ENCODE measurements at regions of chr4 and their contacts with region 1.

Region 1: GRCh38 chr4:15636835-15637234 is 18.3 kb downstream of the FBXL5 start:
- DNase-seq: no peak
- ATAC-seq: no peak
- H3K4me3 ChIP-seq: no peak overlapping the region
- H3K27ac ChIP-seq: no peak overlapping the region
- H3K4me1 ChIP-seq: no peaks in the 10 kb centered on the region
- H3K27me3 ChIP-seq: no peaks in the 10 kb centered on the region
- CTCF ChIP-seq: no peak

Region 2: GRCh38 chr4:15144249-15144966 is 492.4 kb before region 1 on chr4:
- CTCF ChIA-PET with region 1: no interaction called
- POLR2A ChIA-PET with region 1: no interaction called
- in situ Hi-C with region 1: no loop called
- intact Hi-C with region 1: no loop called
- DNase-seq: no peak
- ATAC-seq: no peak
- H3K4me3 ChIP-seq: no peak overlapping the region
- H3K27ac ChIP-seq: no peak overlapping the region
- H3K4me1 ChIP-seq: no peaks in the 10 kb centered on the region
- H3K27me3 ChIP-seq: no peaks in the 10 kb centered on the region
- CTCF ChIP-seq: no peak

Region 3: GRCh38 chr4:15488658-15489470 is 148.0 kb before region 1 on chr4:
- CTCF ChIA-PET with region 1: no interaction called
- POLR2A ChIA-PET with region 1: no interaction called
- in situ Hi-C with region 1: no loop called
- intact Hi-C with region 1: loop called (anchors 10 kb)
- DNase-seq: no peak
- ATAC-seq: no peak
- H3K4me3 ChIP-seq: no peak overlapping the region
- H3K27ac ChIP-seq: no peak overlapping the region
- H3K4me1 ChIP-seq: no peaks in the 10 kb centered on the region
- H3K27me3 ChIP-seq: no peaks in the 10 kb centered on the region
- CTCF ChIP-seq: no peak

Region 4: DNA sequence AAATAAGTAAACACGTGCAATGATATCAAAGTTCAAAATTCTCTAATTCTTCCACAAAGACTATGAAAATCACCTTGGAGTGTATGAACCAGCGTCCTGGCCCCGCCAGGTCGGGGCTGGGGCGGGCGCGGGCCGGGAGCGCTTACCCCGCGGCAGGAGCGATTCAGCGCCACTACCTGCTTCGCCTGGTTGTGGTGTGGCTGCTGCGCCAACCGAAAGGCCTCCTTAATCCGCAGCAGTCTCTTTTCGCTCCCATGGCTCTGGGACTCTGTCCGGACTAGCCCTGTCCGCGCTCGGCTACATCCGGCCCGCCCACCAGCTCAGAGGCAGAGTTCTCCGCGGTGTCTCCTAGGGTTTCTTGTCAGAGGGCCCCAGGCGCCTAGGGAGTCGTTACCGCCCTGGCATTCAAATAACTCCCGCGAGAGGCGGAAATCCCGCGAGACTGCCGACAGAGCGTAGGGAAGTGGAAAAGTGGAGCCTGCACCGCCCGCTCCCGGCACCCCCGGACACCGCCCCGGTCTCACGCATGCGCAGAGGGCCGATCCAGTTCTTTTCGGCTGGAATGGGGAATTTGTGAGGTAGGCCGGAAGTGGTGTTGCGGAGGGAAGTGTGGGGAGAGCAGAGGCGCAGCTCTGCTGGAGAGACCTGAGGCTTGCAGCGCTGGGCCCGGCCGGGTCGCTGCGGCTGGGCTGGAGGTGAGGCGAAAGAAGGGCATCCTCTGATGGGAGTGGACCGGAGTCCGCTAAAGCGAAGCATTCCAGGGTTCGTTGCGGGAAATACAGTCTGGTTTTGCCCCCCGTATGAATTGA is 44.6 kb after region 1 on chr4 and contains the start of gene FAM200B:
- CTCF ChIA-PET with region 1: no interaction called
- POLR2A ChIA-PET with region 1: no interaction called
- in situ Hi-C with region 1: no loop called
- intact Hi-C with region 1: no loop called
- DNase-seq: peak; percentile 91
- ATAC-seq: peak; percentile 96
- H3K4me3 ChIP-seq: peak within 1 kb of the TSS; percentile 93 to 94
- H3K27ac ChIP-seq: peak within 1 kb of the TSS; percentile 99
- H3K4me1 ChIP-seq: peaks cover 13% of the 10 kb centered on the region; the same call in 1 of the 2 replicates
- H3K27me3 ChIP-seq: no peaks in the 10 kb centered on the region
- CTCF ChIP-seq: no peak
- total RNA-seq, gene FAM200B: 15.2 TPM